ENCODE measurements at regions of chr5 and their contacts with region 1.

Region 1: GRCh38 chr5:127441799-127442484 is 75.5 kb upstream of the PRRC1 start:
- DNase-seq: no peak
- ATAC-seq: no peak
- H3K4me3 ChIP-seq: no peak overlapping the region
- H3K27ac ChIP-seq: no peak overlapping the region
- H3K4me1 ChIP-seq: no peaks in the 10 kb centered on the region
- H3K27me3 ChIP-seq: no peaks in the 10 kb centered on the region

Region 2: DNA sequence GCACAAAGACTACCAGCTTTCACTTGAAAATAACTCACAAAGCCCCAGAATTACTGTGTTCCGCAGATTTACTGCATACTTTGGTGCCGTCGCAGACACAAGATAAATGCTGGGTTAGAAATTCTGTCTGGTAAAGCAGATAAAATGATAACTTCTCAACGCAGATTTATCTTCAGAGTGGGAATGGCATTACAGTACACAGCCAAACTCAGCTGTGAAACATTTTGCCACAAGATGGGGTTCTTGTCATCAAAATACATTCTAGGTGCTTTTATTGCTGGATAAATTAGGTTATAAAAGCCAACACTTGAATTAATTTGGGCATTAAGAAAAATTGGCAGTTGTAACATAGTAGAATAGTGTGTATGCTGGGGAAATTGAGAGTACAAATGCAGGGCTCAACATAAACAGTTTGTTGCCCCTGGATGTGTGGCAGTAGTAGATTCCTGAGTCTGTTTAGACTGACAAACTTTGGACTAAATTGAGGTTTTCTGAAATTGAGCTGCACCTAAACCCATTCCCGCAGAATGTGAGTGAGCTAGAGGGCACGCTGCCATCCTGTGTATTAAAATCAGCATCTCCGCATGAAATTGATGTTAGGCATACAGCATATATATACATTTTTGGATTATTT is 603.9 kb before region 1 on chr5:
- intact Hi-C with region 1: loop called in 1 of 4 experiments (anchors 5 kb)
- DNase-seq: no peak
- ATAC-seq: peak; percentile 50 to 71
- H3K4me3 ChIP-seq: no peak overlapping the region
- H3K27ac ChIP-seq: no peak overlapping the region
- H3K4me1 ChIP-seq: no peaks in the 10 kb centered on the region
- H3K27me3 ChIP-seq: no peaks in the 10 kb centered on the region

Region 3: GRCh38 chr5:127290019-127290945 is 151.7 kb before region 1 on chr5 and contains the start of gene MEGF10:
- intact Hi-C with region 1: loop called (anchors 2 to 5 kb)
- DNase-seq: peak; percentile 29 to 79 (median 73)
- ATAC-seq: peak; percentile 79 to 87
- H3K4me3 ChIP-seq: peak within 1 kb of the TSS; percentile 2
- H3K27ac ChIP-seq: no peak within 1 kb of the TSS
- H3K4me1 ChIP-seq: no peaks in the 10 kb centered on the region
- H3K27me3 ChIP-seq: no peaks in the 10 kb centered on the region
- total RNA-seq, gene MEGF10: 0.47 to 2.7 (median 1.4) TPM

Measured in right cardiac atrium (tissue), 5 donors.